Left ventricle myocardium superior (tissue), 1 donor: ENCODE measurements at regions of chr3 and their contacts with region 1.

Region 1: GRCh38 chr3:4158329-4158728 is 144.8 kb upstream of the SETMAR start:
- DNase-seq: no peak
- ATAC-seq: no peak

Region 2: DNA sequence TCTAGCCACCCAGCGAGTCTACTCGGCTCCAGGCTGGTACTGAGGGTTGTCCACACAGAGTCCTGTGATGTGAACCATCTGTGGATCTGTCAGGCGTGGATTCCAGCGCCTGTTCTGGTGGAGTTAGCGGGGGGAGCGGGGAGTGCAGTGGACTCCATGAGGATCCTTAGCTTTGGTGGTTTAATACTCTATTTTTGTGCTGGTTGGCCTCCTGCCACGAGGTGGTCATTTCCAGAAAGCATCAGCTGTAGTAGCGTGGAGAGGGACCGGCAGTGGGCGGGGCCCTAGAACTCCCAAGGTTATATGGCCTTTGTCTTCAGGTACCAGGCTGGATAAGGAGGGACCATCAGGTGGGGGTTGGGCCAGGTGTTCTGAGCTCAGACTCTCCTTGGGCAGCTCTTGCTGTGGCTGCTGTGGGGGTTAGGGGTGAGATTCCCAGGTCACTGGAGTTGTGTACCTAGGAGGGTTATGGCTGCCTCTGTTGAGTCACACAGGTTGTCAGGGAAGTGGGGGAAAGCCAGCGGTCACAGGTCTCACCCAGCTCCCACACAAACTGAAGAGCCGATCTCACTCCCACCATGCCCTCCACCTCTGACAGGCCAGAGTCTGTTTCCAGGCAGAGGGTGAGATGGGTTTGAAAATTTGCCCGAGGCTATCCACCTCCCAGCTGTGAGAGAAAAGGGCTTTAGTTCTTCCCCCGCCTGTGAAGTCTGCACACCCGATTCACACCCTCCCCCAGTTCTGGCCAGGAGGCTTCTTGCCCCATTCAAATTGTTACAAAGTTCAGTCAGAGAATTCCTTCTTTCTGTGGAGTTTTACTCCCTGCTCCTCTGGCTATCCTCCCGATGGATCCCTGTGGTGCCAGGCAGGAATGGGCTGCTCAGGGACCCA is 1475.9 kb after region 1 on chr3:
- intact Hi-C with region 1: loop called (anchors 5 kb)
- DNase-seq: no peak
- ATAC-seq: no peak